ENCODE measurements at regions of chr19 and their contacts with region 1.

Region 1: GRCh38 chr19:58362272-58362994 is at the start of gene ZNF497:
- DNase-seq: peak; percentile 98
- ATAC-seq: peak; percentile 91
- H3K4me3 Mint-ChIP-seq: peak within 1 kb of the TSS; percentile 95
- H3K27ac Mint-ChIP-seq: peak within 1 kb of the TSS; percentile 90
- H3K4me1 Mint-ChIP-seq: peaks cover 18% of the 10 kb centered on the region
- H3K27me3 Mint-ChIP-seq: no peaks in the 10 kb centered on the region
- total RNA-seq, gene ZNF497: 0.87 to 0.91 TPM

Region 2: DNA sequence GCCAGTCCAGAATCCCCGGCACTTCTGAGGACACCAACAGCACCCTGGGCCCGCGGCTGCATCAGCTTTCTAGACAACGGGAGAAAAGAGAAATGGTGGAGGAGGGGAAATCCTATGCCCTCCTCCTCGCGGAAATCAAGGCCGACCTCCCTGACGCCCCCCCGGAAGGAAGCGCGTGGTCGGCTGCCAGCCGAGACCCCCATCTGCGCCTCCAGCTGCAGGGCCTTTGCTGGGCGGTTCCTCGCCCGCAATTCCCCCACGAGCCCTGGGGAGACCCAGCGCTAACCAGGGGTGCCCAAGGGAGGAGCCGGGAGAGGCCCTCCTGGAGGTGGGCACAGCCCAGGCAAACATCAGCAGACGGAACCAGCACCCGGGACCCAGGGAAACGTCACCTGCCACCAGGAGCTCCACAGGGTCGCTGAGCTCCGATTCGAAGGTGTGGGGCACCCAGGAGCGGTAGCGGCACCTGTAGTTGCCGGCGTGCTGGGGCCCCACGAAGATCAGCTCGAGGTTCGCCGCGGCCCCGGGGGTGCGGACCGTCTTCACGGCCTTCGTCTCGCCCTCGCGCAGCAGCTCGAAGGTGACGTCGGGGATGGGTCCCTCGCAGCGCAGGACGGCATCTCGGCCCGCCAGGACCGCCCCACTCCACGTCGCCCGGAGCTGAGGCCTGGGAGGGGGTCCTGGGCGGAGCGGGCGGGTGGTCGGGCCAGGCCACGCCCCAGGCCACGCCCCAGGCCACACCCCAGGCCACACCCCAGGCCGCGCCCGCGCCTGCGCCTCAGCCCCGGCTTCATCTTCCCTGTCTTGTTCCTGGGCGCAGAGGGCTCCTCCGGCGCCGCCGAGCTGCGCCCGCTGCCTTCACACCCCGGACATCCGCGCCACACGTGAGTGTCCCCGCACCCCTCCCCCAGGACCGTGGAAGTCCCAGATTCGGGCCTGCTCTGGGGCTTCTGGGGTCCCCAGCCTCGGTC is 15.2 kb before region 1 on chr19:
- CTCF ChIA-PET with region 1: interaction called, 16 read pairs
- DNase-seq: peak; percentile 83
- ATAC-seq: peak; percentile 97
- H3K4me3 Mint-ChIP-seq: peak overlapping the region; percentile 94
- H3K27ac Mint-ChIP-seq: peak overlapping the region; percentile 89
- H3K4me1 Mint-ChIP-seq: peaks cover 26% of the 10 kb centered on the region
- H3K27me3 Mint-ChIP-seq: no peaks in the 10 kb centered on the region

Region 3: DNA sequence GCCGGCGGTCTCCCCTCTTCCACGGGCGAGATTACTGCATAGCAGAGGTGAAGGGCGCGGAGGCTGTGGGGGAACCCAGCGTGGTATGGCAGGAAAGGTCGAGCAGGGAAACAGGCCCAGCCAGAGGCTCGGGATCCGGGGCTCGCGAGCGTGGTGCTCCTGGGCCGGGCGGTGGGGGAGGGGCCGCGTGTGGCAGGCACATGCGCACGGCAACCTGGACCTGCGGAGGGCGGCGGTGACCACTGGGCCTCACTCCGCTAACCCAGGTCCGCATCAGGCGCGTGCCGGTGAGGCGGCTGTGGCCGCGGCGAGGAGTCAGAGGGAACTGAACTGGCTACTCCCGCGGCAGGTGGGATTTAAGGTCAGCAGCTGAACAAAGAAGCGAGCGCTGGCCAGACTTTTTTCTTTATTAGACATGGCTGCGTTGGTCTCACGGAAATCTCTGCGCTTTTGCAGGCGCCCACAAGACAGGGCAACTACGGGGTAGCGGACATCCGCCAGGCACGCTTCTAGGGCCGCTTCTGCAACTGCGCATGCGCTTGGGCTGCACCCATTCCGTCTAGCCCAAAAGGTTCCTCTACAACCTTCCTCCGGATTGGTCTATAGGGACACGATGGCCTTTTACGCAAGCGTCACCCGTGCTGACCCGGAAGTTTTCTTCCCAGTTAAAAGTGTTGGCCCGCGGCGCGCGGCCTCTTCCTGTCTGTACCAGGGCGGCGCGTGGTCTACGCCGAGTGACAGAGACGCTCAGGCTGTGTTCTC is 24.3 kb after region 1 on chr19 and contains the start of gene RPS5:
- CTCF ChIA-PET with region 1: no interaction called
- DNase-seq: peak; percentile 98
- ATAC-seq: peak; percentile 87
- H3K4me3 Mint-ChIP-seq: peak within 1 kb of the TSS; percentile 98
- H3K27ac Mint-ChIP-seq: peak within 1 kb of the TSS; percentile 96
- H3K4me1 Mint-ChIP-seq: peaks cover 47% of the 10 kb centered on the region
- H3K27me3 Mint-ChIP-seq: no peaks in the 10 kb centered on the region
- total RNA-seq, gene RPS5: 914 to 1,022 TPM

Measured in activated CD8-positive, alpha-beta memory T cell treated with anti-CD3 and anti-CD28 coated beads, Interleukin-2, amount 10 ng/mL, durations not matched to agents 7 days and 5 days (primary cell).